K562 (cell line): ENCODE measurements at regions of chr1 and their contacts with region 1.

Region 1: DNA sequence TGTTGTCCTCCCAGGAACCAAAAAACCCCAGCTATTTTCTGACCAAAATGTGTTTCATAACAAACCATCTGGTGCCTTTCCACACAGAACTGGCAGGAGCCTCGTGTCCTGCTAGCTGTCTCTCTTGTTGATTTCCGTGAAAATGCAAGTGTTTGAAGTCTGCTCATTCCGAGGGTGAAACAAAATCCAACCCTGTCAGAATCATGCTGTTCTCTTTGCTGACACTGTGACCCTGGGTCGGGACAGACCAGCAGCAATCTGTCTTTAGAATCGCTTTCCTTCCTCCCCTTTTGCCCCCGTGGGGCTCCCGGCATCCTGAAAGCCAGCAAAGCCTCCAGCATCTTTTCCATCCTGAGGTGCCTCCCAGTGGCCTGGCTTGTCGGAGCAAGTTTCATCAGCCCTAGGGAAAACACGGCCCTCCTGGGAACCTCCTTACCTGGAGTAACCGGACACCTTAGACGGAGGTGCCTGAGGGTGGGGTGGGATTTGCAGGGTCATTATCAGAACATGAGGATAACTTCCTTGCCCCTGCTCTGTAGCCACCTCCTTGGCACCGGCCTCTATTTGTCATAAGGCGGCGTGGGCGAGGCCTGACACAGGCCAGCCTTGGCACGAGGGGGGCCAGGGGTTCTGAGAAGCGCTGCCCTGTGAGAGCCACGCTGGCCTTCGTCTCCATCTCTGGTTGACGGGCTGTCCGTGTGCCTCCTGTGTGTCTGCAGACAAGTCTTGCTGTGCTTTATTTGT is 24.9 kb downstream of the LDLRAP1 start:
- DNase-seq: no peak
- ATAC-seq: no peak
- H3K4me3 ChIP-seq: no peak overlapping the region
- H3K27ac ChIP-seq: peak overlapping the region; percentile 47; the same call in 1 of the 3 replicates
- H3K4me1 ChIP-seq: peaks cover 24 to 46% of the 10 kb centered on the region in 2 experiments
- H3K27me3 ChIP-seq: peaks cover 0 to 10% of the 10 kb centered on the region in 2 experiments; a peak in 2 of 5 replicates
- CTCF ChIP-seq: no peak; a peak in 1 of 6 replicates
- EP300 ChIP-seq: no peak
- POLR2A ChIP-seq: no peak
- RAD21 ChIP-seq: no peak

Region 2: DNA sequence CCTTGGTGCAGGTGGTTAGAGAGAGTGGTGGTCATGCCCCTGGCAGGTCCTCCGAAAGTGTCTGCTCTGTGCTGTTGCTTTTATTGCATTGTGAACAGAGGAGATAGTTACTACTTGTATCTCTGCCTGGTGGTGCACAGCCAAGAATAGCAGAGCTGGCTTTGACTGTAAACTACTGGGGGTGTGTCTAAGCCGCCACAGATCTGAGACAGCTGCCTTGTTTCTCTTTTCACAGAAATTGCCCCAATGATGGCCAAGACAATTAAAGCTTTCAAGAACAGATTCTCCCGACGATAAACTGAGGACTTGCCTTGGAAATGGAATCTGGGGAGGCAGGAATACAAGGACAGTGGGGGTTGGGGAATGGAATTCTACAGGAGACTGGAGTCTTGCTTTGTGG is 1809.0 kb before region 1 on chr1:
- CTCF ChIA-PET with region 1: no interaction called
- POLR2A ChIA-PET with region 1: no interaction called
- in situ Hi-C with region 1: no loop called
- intact Hi-C with region 1: no loop called
- DNase-seq: no peak
- ATAC-seq: no peak
- H3K4me3 ChIP-seq: no peak overlapping the region
- H3K27ac ChIP-seq: no peak overlapping the region
- H3K4me1 ChIP-seq: no peaks in the 10 kb centered on the region
- H3K27me3 ChIP-seq: no peaks in the 10 kb centered on the region; a peak in 1 of 5 replicates
- CTCF ChIP-seq: no peak
- EP300 ChIP-seq: no peak
- POLR2A ChIP-seq: no peak
- RAD21 ChIP-seq: no peak

Region 3: DNA sequence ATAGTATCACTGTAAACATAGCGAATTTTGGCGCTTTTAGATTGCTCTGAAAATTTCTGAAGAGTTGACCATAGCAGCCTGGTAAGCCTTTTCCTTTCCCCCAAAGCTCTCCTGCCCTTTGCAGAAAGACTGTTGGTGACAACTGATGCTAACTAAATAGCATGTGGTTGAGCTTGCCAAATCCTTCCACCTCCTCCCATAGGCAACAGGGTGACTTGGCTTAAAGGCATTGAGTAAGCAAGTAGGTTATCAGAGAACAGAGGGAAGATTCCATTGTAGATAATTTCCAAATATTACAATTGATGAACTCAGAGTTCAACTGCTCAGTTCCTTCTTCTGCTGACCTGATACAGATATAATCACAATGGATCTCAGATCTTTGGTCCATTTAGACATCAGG is 1723.1 kb before region 1 on chr1:
- CTCF ChIA-PET with region 1: no interaction called
- POLR2A ChIA-PET with region 1: no interaction called
- in situ Hi-C with region 1: loop called (anchors 10 kb)
- intact Hi-C with region 1: no loop called
- DNase-seq: peak in 2 of 4 experiments; percentile 5 to 9
- ATAC-seq: no peak
- H3K4me3 ChIP-seq: no peak overlapping the region
- H3K27ac ChIP-seq: no peak overlapping the region
- H3K4me1 ChIP-seq: no peaks in the 10 kb centered on the region; a peak in 1 of 5 replicates
- H3K27me3 ChIP-seq: no peaks in the 10 kb centered on the region
- CTCF ChIP-seq: no peak
- EP300 ChIP-seq: no peak
- POLR2A ChIP-seq: no peak
- RAD21 ChIP-seq: no peak

Region 4: DNA sequence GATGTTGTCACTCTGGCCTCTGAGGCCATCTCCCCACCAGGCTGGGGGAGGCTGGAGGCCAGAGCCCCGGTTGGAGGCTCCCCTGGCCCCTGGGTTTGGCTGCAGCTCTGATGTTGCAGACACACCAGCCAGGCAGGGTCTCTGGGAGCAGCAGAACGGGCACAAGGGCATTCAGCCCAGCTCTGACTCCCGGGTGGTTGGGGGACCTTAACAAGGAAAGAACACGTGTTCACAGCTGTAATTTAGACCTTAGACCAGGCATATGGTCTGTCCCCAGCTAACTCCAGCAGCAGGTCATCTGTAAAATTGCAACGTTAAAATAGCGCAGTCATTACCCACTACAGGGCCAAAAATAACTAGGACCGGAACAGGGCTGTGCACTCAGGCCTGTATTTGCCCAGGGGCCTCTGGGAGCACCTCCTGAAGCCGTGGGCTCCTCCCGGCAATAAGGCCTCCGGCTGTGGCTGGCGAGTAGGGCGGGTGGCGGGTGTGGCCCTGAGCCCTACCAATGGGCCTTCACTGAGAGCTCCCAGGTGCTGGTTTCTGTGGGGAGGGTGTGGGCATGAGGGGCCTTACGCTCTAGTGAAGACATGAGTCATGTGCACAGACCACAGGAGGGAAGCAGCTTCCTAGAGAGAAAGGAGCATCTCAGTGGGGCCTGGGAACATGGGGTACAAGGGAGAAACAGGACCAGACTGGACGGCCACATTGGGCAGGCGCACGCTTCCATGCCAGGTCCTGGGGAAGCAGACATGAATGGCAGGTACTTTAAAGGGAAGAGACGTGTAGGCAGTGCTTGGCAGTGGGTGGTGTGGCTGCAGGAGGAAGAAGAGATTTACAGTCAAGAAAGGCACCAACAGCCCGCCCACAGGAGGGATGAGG is 18.7 kb before region 1 on chr1:
- CTCF ChIA-PET with region 1: no interaction called
- POLR2A ChIA-PET with region 1: interaction called, 39 read pairs
- in situ Hi-C with region 1: no loop called
- intact Hi-C with region 1: no loop called
- DNase-seq: peak; percentile 92 to 98 (median 96)
- ATAC-seq: peak; percentile 91
- H3K4me3 ChIP-seq: no peak overlapping the region
- H3K27ac ChIP-seq: peak overlapping the region; percentile 85
- H3K4me1 ChIP-seq: peaks cover 50 to 66% of the 10 kb centered on the region in 2 experiments
- H3K27me3 ChIP-seq: no peaks in the 10 kb centered on the region
- CTCF ChIP-seq: no peak; a peak in 1 of 6 replicates
- EP300 ChIP-seq: peak; percentile 48; the same call in 1 of the 2 replicates
- POLR2A ChIP-seq: peak; percentile 49
- RAD21 ChIP-seq: 0 out of 4 replicates have a peak, but pooled peaks of 1 of the 2 experiments have one; percentile 9

Region 5: DNA sequence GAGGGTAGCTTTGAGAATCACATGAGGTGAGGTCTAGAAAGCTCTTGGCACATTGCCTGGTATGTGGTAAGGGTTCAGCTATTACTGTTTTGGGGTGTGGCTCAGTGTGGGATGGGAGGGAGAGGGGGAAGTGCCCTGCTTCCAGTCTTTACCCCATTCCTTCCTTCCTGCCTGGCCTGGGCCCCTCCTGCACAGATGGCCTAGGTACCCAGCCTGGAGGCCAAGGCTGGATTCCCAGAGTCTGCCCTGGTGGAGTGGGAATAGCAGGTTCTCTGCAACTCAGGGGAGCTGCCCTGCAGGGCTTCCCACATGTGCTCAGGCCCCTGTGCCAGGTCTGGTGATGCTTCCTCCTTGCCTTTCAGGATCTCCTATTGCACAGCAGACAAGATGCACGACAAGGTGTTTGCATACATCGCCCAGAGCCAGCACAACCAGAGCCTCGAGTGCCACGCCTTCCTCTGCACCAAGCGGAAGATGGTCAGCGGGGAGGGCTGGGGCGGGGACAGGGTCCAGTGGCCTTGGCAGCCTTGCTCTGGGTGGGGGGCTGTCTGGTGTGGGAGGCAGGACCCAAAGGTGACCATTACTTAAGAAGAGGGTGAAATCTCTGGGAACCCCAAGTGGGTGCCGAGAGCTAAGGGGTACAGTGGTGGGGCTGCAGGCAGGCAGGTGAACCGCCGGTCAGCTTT is 11.3 kb before region 1 on chr1:
- CTCF ChIA-PET with region 1: no interaction called
- POLR2A ChIA-PET with region 1: interaction called, 39 read pairs
- in situ Hi-C with region 1: no loop called
- intact Hi-C with region 1: no loop called
- DNase-seq: no peak
- ATAC-seq: no peak
- H3K4me3 ChIP-seq: no peak overlapping the region
- H3K27ac ChIP-seq: no peak overlapping the region
- H3K4me1 ChIP-seq: peaks cover 12 to 35% of the 10 kb centered on the region in 2 experiments
- H3K27me3 ChIP-seq: no peaks in the 10 kb centered on the region
- CTCF ChIP-seq: no peak
- EP300 ChIP-seq: no peak
- POLR2A ChIP-seq: no peak
- RAD21 ChIP-seq: no peak

Region 6: DNA sequence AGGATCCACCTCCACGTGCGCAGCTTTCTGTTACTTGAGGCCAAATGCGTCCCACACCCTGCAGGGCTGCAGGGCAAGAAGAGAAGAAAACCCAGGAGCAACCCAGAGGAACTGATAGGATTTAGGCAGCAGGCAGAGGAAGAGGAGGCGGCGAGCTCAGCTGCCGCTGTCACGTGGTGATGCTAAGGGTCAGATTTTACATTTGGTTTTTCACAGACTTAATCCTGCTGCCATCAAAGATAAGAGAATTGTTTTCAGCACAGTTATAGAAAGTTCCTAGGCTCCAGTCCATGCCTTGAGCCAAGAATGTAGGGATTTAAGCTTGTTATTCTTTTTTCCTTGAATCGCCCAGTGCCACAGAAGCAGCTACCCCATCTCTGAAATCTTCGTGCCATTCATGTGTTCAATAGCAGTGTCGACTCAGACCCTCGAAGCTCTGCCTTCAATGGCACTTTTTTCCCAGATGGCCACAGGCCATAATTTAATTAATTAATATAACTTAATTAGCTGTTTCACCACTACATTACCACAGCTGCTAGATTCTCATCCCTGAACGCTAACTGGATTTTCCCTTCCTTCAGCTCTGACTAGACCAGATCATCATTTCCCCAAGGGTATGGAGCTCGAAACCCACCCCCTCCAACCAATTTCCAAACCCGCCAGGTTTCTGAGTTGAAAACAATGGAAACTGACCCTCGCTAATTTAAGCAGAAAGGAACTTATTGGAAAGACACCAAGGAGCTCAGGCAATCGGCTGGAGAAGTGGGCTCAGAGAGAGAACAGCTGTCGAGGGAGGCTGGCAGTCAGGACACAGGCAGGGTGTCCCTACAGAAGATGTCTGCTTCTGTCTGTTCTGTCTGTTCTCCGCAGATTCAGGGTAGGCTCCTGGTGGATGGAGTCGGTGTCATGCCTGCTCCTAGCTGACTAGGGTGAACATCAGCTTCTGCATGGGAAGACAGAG is 11.3 kb after region 1 on chr1:
- CTCF ChIA-PET with region 1: no interaction called
- POLR2A ChIA-PET with region 1: interaction called, 10 read pairs
- in situ Hi-C with region 1: no loop called
- intact Hi-C with region 1: no loop called
- DNase-seq: no peak
- ATAC-seq: no peak
- H3K4me3 ChIP-seq: no peak overlapping the region
- H3K27ac ChIP-seq: no peak overlapping the region
- H3K4me1 ChIP-seq: peaks cover 0 to 18% of the 10 kb centered on the region in 2 experiments; a peak in 3 of 5 replicates
- H3K27me3 ChIP-seq: peaks cover 34 to 58% of the 10 kb centered on the region in 2 experiments
- CTCF ChIP-seq: no peak
- EP300 ChIP-seq: no peak
- POLR2A ChIP-seq: no peak
- RAD21 ChIP-seq: no peak